ENCODE measurements at regions of chr20 and their contacts with region 1.

Region 1: DNA sequence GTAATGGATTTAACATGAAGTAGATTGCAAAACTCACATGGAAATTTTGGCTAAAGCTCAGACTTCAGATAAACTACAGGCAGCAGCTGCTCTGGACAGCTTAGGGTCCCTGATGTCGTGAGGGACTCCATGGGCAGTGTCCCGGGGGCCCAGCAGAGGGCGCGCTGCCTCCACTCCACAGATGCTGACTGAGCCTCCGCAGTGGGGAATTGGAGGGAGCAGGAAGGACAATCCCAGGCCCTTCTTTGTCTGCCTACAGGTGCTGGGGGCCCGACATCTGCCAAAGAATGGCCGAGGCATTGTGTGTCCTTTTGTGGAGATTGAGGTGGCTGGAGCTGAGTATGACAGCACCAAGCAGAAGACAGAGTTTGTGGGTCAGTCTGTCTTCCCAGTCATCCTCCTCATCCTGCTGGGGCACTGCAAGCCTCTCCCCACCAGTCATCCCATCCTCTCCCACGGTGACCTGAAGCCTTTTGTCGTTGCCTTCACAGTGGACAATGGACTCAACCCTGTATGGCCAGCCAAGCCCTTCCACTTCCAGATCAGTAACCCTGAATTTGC is 35.9 kb downstream of the PLCG1 start:
- DNase-seq: peak; percentile 60
- H3K4me3 Mint-ChIP-seq: no peak overlapping the region
- H3K27ac Mint-ChIP-seq: peak overlapping the region; percentile 35
- H3K4me1 Mint-ChIP-seq: peaks cover 12% of the 10 kb centered on the region
- H3K27me3 Mint-ChIP-seq: no peaks in the 10 kb centered on the region

Region 2: DNA sequence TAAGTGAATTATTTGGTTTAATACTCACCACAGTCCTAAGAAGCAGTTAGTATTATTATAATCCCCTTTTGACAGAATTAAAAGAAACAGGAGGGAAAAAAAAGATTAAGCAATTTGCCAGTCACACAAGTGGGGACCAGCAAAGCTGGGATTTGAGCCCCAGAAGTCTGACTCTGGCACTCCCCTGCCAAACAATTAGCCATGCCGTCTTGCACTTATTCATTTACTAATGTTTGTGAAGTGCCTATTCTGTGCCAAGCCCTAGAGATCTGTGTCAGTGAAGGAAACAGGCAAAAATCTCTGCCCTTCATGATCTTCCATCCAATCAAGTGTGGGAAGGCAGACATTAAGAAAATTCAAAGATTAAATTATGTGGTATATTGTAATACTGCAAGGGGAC is 270.6 kb before region 1 on chr20:
- CTCF ChIA-PET with region 1: no interaction called
- POLR2A ChIA-PET with region 1: no interaction called
- DNase-seq: no peak
- H3K4me3 Mint-ChIP-seq: no peak overlapping the region
- H3K27ac Mint-ChIP-seq: no peak overlapping the region
- H3K4me1 Mint-ChIP-seq: no peaks in the 10 kb centered on the region
- H3K27me3 Mint-ChIP-seq: peaks cover 8% of the 10 kb centered on the region

Region 3: DNA sequence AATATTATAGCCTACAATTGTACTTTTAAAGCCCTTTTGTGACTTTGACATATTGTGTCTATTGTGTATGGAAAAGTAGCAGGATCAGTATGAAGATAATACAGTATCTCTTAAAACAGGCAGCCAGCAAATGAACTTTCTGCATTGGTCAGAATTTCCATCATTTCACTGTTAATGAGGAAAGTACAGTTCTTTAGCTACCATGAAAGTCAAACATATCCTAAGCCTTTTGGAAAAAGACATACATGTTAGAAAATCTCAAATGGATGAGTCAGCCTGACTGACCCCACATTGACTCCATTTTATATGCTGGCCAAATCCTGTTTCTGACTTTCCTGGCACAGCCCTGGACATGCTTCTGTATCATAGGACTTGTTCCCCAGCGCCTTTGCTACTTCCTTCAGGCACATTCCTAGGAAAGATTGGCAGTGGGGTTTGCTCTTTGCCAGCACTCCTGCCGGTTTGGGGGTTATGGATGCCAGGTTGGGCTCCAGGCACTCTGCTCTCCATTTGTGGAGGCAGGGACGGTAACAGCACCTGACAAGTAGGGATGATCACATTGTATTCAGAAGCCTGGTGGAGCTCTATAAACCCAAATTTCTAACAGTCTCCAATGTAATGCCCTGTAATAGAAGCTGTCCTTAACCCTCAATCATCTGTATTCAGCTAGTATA is 100.9 kb before region 1 on chr20:
- CTCF ChIA-PET with region 1: no interaction called
- POLR2A ChIA-PET with region 1: no interaction called
- DNase-seq: no peak
- H3K4me3 Mint-ChIP-seq: no peak overlapping the region
- H3K27ac Mint-ChIP-seq: peak overlapping the region; percentile 24
- H3K4me1 Mint-ChIP-seq: peaks cover 67% of the 10 kb centered on the region
- H3K27me3 Mint-ChIP-seq: no peaks in the 10 kb centered on the region

Region 4: DNA sequence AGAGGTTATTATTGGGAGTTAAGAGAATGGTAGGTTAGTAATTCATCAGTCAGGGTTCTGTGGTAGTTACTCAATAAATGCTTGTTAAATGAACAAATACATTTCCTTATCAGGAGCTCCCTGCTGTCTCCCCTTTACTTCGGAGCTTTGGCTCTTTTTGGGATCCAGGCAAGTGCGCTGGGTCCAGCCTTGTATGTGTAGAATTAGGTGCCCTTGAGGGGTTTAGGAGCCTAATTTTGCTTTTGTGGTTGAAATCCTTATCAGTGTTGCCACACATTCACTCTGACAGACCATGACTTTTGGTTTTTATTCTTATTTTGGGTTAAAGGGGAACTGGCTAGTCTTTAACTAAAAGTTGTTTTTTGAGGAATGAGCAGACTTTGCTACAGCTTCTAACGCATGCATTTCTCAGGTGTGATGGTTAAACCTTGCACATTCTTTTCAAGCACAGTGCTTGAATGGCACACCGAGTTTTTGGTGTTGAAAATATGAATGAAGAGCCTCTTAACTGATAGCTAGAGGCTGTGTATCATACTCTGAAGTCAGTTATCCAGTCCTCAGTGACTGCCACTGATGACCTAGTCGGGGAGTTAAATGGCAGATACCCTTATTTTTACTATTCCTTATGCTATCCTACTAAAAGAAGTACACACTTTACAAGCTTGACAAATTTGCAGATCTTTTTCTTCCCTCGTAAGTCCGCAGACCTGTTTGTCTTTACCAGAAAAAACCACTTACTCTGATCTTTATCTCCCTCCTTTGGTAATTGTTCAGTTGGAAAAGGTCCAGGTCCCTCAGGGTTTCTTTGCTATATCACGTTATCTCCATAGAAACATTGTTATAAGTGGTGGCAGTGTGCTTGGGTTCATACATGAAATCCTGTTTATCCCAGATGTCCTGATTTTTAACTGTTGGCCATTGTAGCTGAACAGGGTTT is 86.6 kb before region 1 on chr20:
- CTCF ChIA-PET with region 1: no interaction called
- POLR2A ChIA-PET with region 1: no interaction called
- DNase-seq: no peak
- H3K4me3 Mint-ChIP-seq: no peak overlapping the region
- H3K27ac Mint-ChIP-seq: peak overlapping the region; percentile 27
- H3K4me1 Mint-ChIP-seq: peaks cover 21% of the 10 kb centered on the region
- H3K27me3 Mint-ChIP-seq: no peaks in the 10 kb centered on the region

Region 5: GRCh38 chr20:41155261-41155660 is 18.0 kb before region 1 on chr20:
- CTCF ChIA-PET with region 1: interaction called, 19 read pairs
- POLR2A ChIA-PET with region 1: interaction called, 39 read pairs
- DNase-seq: no peak
- H3K4me3 Mint-ChIP-seq: no peak overlapping the region
- H3K27ac Mint-ChIP-seq: peak overlapping the region; percentile 97
- H3K4me1 Mint-ChIP-seq: peaks cover 98% of the 10 kb centered on the region
- H3K27me3 Mint-ChIP-seq: no peaks in the 10 kb centered on the region

Region 6: GRCh38 chr20:41275301-41275731 is 102.1 kb after region 1 on chr20:
- CTCF ChIA-PET with region 1: no interaction called
- POLR2A ChIA-PET with region 1: no interaction called
- DNase-seq: no peak
- H3K4me3 Mint-ChIP-seq: no peak overlapping the region
- H3K27ac Mint-ChIP-seq: no peak overlapping the region
- H3K4me1 Mint-ChIP-seq: no peaks in the 10 kb centered on the region
- H3K27me3 Mint-ChIP-seq: peaks cover 4% of the 10 kb centered on the region

Region 7: GRCh38 chr20:41339507-41340326 is 166.5 kb after region 1 on chr20:
- CTCF ChIA-PET with region 1: interaction called, 30 read pairs
- POLR2A ChIA-PET with region 1: interaction called, 3 read pairs
- DNase-seq: peak; percentile 86
- H3K4me3 Mint-ChIP-seq: peak overlapping the region; percentile 62
- H3K27ac Mint-ChIP-seq: no peak overlapping the region
- H3K4me1 Mint-ChIP-seq: peaks cover 12% of the 10 kb centered on the region
- H3K27me3 Mint-ChIP-seq: peaks cover 5% of the 10 kb centered on the region